ENCODE measurements at regions of chr9 and their contacts with region 1.

Region 1: GRCh38 chr9:19925817-19926503 is 137.1 kb upstream of the SLC24A2 start:
- DNase-seq: peak; percentile 64
- ATAC-seq: peak; percentile 99

Region 2: GRCh38 chr9:19286634-19287200 is 639.2 kb before region 1 on chr9:
- intact Hi-C with region 1: no loop called
- DNase-seq: no peak
- ATAC-seq: no peak

Region 3: GRCh38 chr9:20356403-20357035 is 430.6 kb after region 1 on chr9:
- intact Hi-C with region 1: loop called (anchors 10 kb)
- DNase-seq: peak; percentile 66
- ATAC-seq: peak; percentile 89

Region 4: DNA sequence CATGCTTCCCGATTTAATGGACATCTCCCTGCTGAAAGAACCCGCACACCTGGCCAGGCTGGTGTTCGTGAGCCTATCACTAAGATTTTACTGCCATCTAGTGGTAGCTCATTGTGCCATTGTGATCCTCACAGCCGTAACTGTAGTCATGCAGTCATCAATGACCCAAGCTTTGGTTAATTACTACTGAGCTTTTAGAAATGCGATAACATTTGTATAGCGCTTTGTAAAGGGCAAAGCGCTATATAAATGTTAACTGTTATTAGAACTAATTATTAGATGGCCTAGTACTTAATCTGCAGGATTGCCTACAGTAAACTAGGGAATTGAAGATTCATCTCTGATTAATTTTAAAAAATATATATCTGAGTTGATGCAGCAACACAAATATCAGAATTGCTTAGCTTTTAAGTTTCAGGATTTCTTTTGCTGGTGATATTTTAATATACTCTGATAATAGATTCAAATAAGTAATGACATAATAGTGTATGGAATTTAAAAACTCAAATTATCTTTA is 1015.3 kb after region 1 on chr9:
- intact Hi-C with region 1: loop called (anchors 5 kb)
- DNase-seq: peak; percentile 57
- ATAC-seq: peak; percentile 92

Region 5: DNA sequence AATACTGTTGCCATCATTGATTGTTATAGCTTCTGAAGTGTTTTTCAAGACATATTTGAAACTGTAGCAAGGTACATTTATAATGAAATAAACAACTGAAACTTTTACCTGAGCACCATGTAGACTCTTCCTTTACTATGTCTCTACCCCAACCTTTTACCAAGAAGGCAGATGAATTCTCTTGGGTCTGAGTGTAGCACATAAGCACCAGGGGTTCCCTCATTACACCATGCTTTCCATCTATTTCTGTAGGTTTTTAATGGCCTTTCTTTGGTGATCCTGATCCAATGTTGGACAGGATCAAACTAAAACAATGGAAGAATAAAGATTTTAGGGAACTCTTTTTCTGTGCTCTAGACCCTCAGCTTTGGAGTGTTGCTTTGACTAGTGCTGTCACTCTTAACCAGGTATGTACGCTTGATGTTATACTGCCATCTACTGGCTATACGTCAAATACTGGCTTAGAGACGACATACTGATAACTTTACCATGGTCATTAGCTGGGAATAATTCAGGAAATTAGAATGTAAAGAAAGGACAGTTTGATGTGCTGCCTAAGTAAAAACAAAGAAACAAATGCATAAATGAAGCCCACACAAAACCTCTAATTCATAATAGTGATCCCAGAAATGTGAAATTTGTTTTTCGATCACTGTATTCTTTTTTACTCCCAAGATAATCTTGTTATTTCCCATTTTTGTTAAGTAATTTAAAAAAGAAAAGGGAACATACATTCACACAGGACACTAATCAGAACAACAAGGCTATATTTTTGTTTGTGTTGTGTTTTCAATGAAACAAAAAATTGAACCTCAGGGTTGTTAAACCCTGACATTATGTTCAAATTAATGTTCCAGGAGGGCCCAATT is 1185.0 kb after region 1 on chr9:
- intact Hi-C with region 1: loop called (anchors 10 kb)
- DNase-seq: no peak
- ATAC-seq: peak; percentile 89